Dendritic cell treated with granulocyte-macrophage colony-stimulating factor and Interleukin-4, amounts not matched to agents 40 ng/mL and 50 ng/mL, for 4 days (primary cell): ENCODE measurements at regions of chr2 and their contacts with region 1.

Region 1: GRCh38 chr2:104872866-104873688 is 19.2 kb downstream of the POU3F3 start:
- H3K4me3 Mint-ChIP-seq: peak overlapping the region; percentile 72
- H3K27ac Mint-ChIP-seq: no peak overlapping the region
- H3K4me1 Mint-ChIP-seq: peaks cover 27% of the 10 kb centered on the region
- H3K27me3 Mint-ChIP-seq: peaks cover 82% of the 10 kb centered on the region

Region 2: GRCh38 chr2:104033399-104033798 is 839.7 kb before region 1 on chr2:
- intact Hi-C with region 1: loop called (anchors 10 kb)
- H3K4me3 Mint-ChIP-seq: no peak overlapping the region
- H3K27ac Mint-ChIP-seq: no peak overlapping the region
- H3K4me1 Mint-ChIP-seq: no peaks in the 10 kb centered on the region
- H3K27me3 Mint-ChIP-seq: no peaks in the 10 kb centered on the region

Region 3: GRCh38 chr2:105274046-105274445 is 401.0 kb after region 1 on chr2:
- intact Hi-C with region 1: no loop called
- H3K4me3 Mint-ChIP-seq: no peak overlapping the region
- H3K27ac Mint-ChIP-seq: no peak overlapping the region
- H3K4me1 Mint-ChIP-seq: no peaks in the 10 kb centered on the region
- H3K27me3 Mint-ChIP-seq: no peaks in the 10 kb centered on the region